CD4-positive, alpha-beta T cell (primary cell): ENCODE measurements at regions of chr10 and their contacts with region 1.

Region 1: GRCh38 chr10:101782811-101783735 is at the start of gene NPM3:
- DNase-seq: peak; percentile 61 to 87 (median 76)
- ATAC-seq: peak; percentile 81
- H3K4me3 ChIP-seq: peak within 1 kb of the TSS; percentile 90
- H3K4me3 Mint-ChIP-seq: peak within 1 kb of the TSS; percentile 100
- H3K27ac ChIP-seq: peak within 1 kb of the TSS; percentile 62 to 64
- H3K27ac Mint-ChIP-seq: peak within 1 kb of the TSS; percentile 86
- H3K4me1 ChIP-seq: peaks cover 62% of the 10 kb centered on the region
- H3K4me1 Mint-ChIP-seq: peaks cover 71% of the 10 kb centered on the region
- H3K27me3 ChIP-seq: peaks cover 15 to 16% of the 10 kb centered on the region in 2 experiments
- H3K27me3 Mint-ChIP-seq: peaks cover 11% of the 10 kb centered on the region
- CTCF ChIP-seq: no peak
- total RNA-seq, gene NPM3: 15.5 to 15.8 TPM

Region 2: GRCh38 chr10:101214446-101215396 is 568.4 kb before region 1 on chr10:
- CTCF ChIA-PET with region 1: no interaction called
- POLR2A ChIA-PET with region 1: no interaction called
- intact Hi-C with region 1: loop called (anchors 2 kb)
- DNase-seq: peak; percentile 61 to 87 (median 70)
- ATAC-seq: peak; percentile 73
- H3K4me3 ChIP-seq: no peak overlapping the region
- H3K4me3 Mint-ChIP-seq: peak overlapping the region; percentile 60
- H3K27ac ChIP-seq: no peak overlapping the region
- H3K27ac Mint-ChIP-seq: no peak overlapping the region
- H3K4me1 ChIP-seq: peaks cover 53% of the 10 kb centered on the region
- H3K4me1 Mint-ChIP-seq: peaks cover 33% of the 10 kb centered on the region
- H3K27me3 ChIP-seq: peaks cover 84 to 90% of the 10 kb centered on the region in 2 experiments
- H3K27me3 Mint-ChIP-seq: peaks cover 98% of the 10 kb centered on the region
- CTCF ChIP-seq: peak; percentile 88

Region 3: DNA sequence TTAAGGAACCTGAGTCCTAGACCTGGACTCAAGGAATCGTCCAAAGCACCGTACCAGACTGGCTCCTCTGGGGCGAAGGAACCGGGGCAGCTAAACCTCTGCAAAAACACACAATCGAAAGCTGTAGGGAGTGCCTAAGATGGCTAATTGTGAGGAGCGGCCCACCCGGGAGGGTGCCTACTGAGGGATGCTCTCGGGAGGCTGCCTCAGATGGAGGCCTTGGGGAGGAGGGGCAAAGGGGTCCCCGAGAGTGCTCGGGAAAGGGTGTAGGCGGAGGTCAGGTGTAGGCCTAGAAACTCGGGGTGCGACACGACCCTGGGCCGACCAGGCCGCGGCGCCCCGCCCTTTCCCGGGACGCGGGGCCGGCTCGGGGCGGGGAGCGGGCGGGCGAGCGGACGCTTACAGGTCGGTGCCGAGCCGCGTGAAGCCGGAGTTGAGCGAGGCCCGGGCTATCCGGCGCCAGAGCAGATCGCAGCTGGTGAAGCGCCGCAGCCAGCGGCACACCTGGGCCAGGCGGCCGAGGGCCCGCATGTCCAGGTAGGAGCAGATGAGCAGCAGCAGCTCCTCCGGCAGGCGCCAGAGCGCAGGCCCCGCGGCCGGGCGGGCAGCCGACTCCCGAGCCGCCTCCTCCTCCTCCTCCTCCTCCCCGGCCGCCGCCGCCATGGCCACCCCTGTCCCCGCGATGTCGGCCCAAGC is 88.9 kb before region 1 on chr10:
- CTCF ChIA-PET with region 1: no interaction called
- POLR2A ChIA-PET with region 1: interaction called, 5 read pairs
- intact Hi-C with region 1: loop called in 1 of 2 experiments (anchors 5 kb)
- DNase-seq: peak; percentile 46 to 83 (median 63)
- ATAC-seq: peak; percentile 58
- H3K4me3 ChIP-seq: peak overlapping the region; percentile 88
- H3K4me3 Mint-ChIP-seq: peak overlapping the region; percentile 99
- H3K27ac ChIP-seq: peak overlapping the region; percentile 96 to 97
- H3K27ac Mint-ChIP-seq: peak overlapping the region; percentile 98
- H3K4me1 ChIP-seq: peaks cover 23% of the 10 kb centered on the region
- H3K4me1 Mint-ChIP-seq: peaks cover 57% of the 10 kb centered on the region
- H3K27me3 ChIP-seq: no peaks in the 10 kb centered on the region
- H3K27me3 Mint-ChIP-seq: no peaks in the 10 kb centered on the region
- CTCF ChIP-seq: no peak

Region 4: GRCh38 chr10:101818119-101818871 is 35.2 kb after region 1 on chr10 and contains the start of gene OGA:
- CTCF ChIA-PET with region 1: interaction called, 6 read pairs
- POLR2A ChIA-PET with region 1: interaction called, 43 read pairs
- intact Hi-C with region 1: loop called (anchors 2 kb)
- DNase-seq: peak; percentile 92 to 100 (median 98)
- ATAC-seq: peak; percentile 87
- H3K4me3 ChIP-seq: peak within 1 kb of the TSS; percentile 97
- H3K4me3 Mint-ChIP-seq: peak within 1 kb of the TSS; percentile 99
- H3K27ac ChIP-seq: peak within 1 kb of the TSS; percentile 82 to 87
- H3K27ac Mint-ChIP-seq: peak within 1 kb of the TSS; percentile 96
- H3K4me1 ChIP-seq: peaks cover 29% of the 10 kb centered on the region
- H3K4me1 Mint-ChIP-seq: peaks cover 48% of the 10 kb centered on the region
- H3K27me3 ChIP-seq: no peaks in the 10 kb centered on the region
- H3K27me3 Mint-ChIP-seq: no peaks in the 10 kb centered on the region
- CTCF ChIP-seq: no peak
- total RNA-seq, gene OGA: 395 to 416 TPM

Region 5: GRCh38 chr10:101840741-101841453 is 57.8 kb after region 1 on chr10:
- CTCF ChIA-PET with region 1: interaction called, 4 read pairs
- POLR2A ChIA-PET with region 1: interaction called, 6 read pairs
- intact Hi-C with region 1: loop called in 1 of 2 experiments (anchors 2 kb)
- DNase-seq: peak; percentile 49 to 85 (median 62)
- ATAC-seq: peak; percentile 51
- H3K4me3 ChIP-seq: peak overlapping the region; percentile 41
- H3K4me3 Mint-ChIP-seq: peak overlapping the region; percentile 93
- H3K27ac ChIP-seq: no peak overlapping the region
- H3K27ac Mint-ChIP-seq: no peak overlapping the region
- H3K4me1 ChIP-seq: peaks cover 52% of the 10 kb centered on the region
- H3K4me1 Mint-ChIP-seq: peaks cover 64% of the 10 kb centered on the region
- H3K27me3 ChIP-seq: no peaks in the 10 kb centered on the region
- H3K27me3 Mint-ChIP-seq: peaks cover 8% of the 10 kb centered on the region
- CTCF ChIP-seq: peak; percentile 89

Region 6: DNA sequence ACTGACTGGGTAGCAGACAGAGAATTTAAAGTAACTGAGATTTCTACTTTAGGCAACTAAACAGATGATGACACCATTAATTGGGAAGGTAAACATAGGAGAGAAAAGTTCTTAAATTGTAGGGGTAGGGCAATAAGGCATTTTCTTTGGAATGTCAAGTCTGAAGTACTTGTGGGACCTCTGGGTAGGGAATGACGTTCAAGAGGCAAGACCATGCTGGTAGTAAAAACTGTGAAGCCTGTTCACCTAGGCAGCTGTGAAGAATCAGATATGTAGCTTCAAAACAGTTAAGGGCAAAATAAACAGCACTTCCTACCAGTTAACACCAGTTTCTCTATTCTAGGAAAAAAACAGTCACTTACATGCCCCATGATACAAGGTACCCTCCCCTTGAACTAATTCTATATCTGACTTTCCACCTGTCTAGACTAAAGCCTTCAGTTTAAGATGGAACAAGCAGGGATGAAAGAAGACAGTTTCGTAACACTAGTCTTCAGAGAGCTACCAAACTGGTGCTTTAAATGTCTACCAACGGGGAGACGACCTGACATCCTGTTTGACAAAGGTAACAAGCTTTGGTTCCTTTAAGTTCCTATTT is 123.6 kb after region 1 on chr10:
- CTCF ChIA-PET with region 1: no interaction called
- POLR2A ChIA-PET with region 1: no interaction called
- intact Hi-C with region 1: no loop called
- DNase-seq: peak in 1 of 14 experiments; percentile 7
- ATAC-seq: peak; percentile 56
- H3K4me3 ChIP-seq: no peak overlapping the region
- H3K4me3 Mint-ChIP-seq: no peak overlapping the region
- H3K27ac ChIP-seq: no peak overlapping the region
- H3K27ac Mint-ChIP-seq: peak overlapping the region; percentile 31
- H3K4me1 ChIP-seq: no peaks in the 10 kb centered on the region
- H3K4me1 Mint-ChIP-seq: peaks cover 14% of the 10 kb centered on the region
- H3K27me3 ChIP-seq: no peaks in the 10 kb centered on the region
- H3K27me3 Mint-ChIP-seq: no peaks in the 10 kb centered on the region
- CTCF ChIP-seq: no peak

Region 7: DNA sequence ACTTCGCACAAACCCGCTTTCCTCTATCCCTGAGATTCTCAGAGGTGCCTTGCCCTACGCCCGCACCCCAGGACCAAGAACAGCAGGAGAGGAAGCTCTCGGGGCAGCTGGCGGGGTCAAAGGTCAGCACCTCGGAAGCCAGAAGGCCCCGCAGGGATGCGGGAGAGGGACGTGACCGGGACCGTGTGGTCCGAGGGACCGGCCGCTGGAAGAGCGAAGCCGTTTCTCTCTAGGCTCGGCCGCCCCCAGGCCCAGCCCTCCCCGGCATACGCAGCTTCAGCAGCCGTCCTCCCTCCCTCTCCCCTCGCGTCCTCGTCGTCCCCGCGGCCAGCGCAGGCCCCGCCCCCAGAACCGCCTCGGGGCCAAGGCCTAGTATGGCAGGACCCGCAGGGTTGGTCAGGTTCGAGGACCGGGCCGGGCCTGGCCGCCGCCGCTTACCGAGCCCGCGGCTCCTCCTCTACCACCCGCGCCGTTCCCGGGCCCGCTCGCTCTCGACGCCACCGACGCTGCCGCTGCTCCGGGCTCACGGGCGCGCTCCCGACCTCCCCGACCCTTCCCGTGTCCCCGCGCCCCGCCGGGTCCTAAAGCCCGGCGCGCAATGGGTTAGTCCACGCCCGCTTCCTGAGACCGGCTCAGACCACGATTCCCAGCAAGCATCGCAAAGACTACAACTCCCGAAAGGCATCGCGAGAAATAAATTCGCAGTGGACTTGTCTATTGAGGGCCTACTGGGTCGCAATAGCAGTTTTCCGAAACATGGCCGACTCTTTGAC is 272.8 kb after region 1 on chr10 and contains the start of gene ARMH3:
- CTCF ChIA-PET with region 1: interaction called, 3 read pairs
- POLR2A ChIA-PET with region 1: no interaction called
- intact Hi-C with region 1: loop called in 1 of 2 experiments (anchors 10 kb)
- DNase-seq: peak; percentile 75 to 96 (median 84)
- ATAC-seq: peak; percentile 93
- H3K4me3 ChIP-seq: peak within 1 kb of the TSS; percentile 84
- H3K4me3 Mint-ChIP-seq: peak within 1 kb of the TSS; percentile 96
- H3K27ac ChIP-seq: peak within 1 kb of the TSS; percentile 70 to 83
- H3K27ac Mint-ChIP-seq: peak within 1 kb of the TSS; percentile 87
- H3K4me1 ChIP-seq: peaks cover 48% of the 10 kb centered on the region
- H3K4me1 Mint-ChIP-seq: peaks cover 45% of the 10 kb centered on the region
- H3K27me3 ChIP-seq: no peaks in the 10 kb centered on the region
- H3K27me3 Mint-ChIP-seq: no peaks in the 10 kb centered on the region
- CTCF ChIP-seq: no peak
- total RNA-seq, gene ARMH3: 17.7 to 18.9 TPM